ENCODE measurements at regions of chr22 and their contacts with region 1.

Region 1: GRCh38 chr22:31080848-31081649 is at the start of gene SMTN:
- DNase-seq: no peak
- H3K4me3 ChIP-seq: peak within 1 kb of the TSS; percentile 88
- CTCF ChIP-seq: no peak

Region 2: GRCh38 chr22:30908051-30908461 is 173.0 kb before region 1 on chr22:
- CTCF ChIA-PET with region 1: no interaction called
- POLR2A ChIA-PET with region 1: no interaction called
- DNase-seq: no peak
- H3K4me3 ChIP-seq: no peak overlapping the region
- CTCF ChIP-seq: no peak

Region 3: DNA sequence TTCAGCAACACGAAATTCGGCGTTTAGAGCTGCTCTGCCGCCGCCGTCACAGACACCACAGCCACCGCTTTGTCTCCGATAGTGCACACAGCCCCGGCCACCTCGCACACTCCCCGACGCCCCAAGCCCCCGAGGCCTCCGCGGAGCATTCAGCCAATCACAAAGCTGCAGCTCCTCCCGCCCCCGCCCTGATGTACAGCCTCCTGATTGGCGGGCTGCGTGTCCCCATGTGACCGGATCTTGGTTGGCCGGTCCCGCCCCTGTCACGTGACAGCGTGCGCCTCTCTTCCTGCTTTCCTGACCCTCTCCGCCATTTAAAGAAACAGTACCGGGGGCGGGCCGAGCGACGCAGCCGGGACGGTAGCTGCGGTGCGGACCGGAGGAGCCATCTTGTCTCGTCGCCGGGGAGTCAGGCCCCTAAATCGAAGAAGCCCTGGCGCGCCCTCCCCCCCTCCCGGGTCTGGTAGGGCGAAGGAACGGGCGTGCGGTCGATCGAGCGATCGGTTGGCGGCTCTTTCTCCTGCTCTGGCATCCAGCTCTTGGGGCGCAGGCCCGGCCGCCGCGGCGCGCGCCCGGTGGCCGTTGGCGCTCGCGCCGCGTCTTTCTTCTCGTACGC is 112.0 kb before region 1 on chr22 and contains the start of gene TUG1:
- CTCF ChIA-PET with region 1: interaction called, 57 read pairs
- POLR2A ChIA-PET with region 1: interaction called, 25 read pairs
- DNase-seq: peak; percentile 91
- H3K4me3 ChIP-seq: peak within 1 kb of the TSS; percentile 73
- CTCF ChIP-seq: no peak